Mammary epithelial cell (primary cell): ENCODE measurements at regions of chr12 and their contacts with region 1.

Region 1: DNA sequence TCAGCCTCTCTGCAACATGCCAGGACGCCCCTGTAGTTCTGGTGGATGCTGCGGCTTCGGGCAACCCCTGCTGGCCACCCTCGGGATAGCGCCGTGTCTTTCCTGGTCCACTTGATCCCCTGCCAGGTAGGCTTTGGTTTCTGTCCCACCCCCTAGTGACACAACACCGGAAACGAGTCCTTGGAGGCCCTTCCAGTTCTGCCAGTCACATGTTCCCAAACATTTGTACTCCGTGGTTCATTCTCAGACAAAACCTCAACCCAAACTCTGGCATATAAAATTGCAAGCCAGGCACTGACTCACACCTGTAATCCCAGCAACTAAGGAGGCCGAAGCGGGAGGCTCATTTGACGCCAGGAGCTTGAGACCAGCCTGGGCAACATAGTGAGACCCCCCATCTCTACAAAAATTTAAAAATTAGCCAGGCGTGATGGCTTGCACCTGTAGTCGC is 37.1 kb downstream of the RASAL1 start:
- DNase-seq: peak; percentile 97
- H3K4me3 ChIP-seq: no peak overlapping the region
- H3K27ac ChIP-seq: no peak overlapping the region
- H3K4me1 ChIP-seq: peaks cover 2% of the 10 kb centered on the region
- H3K27me3 ChIP-seq: no peaks in the 10 kb centered on the region
- CTCF ChIP-seq: peak; percentile 92 to 94

Region 2: GRCh38 chr12:112096667-112097066 is 1001.8 kb before region 1 on chr12:
- CTCF ChIA-PET with region 1: no interaction called
- dilution Hi-C with region 1: no loop called
- in situ Hi-C with region 1: no loop called
- intact Hi-C with region 1: loop called (anchors 10 kb)
- DNase-seq: peak; percentile 86
- H3K4me3 ChIP-seq: no peak overlapping the region
- H3K27ac ChIP-seq: no peak overlapping the region
- H3K4me1 ChIP-seq: peaks cover 14% of the 10 kb centered on the region
- H3K27me3 ChIP-seq: no peaks in the 10 kb centered on the region
- CTCF ChIP-seq: no peak

Region 3: DNA sequence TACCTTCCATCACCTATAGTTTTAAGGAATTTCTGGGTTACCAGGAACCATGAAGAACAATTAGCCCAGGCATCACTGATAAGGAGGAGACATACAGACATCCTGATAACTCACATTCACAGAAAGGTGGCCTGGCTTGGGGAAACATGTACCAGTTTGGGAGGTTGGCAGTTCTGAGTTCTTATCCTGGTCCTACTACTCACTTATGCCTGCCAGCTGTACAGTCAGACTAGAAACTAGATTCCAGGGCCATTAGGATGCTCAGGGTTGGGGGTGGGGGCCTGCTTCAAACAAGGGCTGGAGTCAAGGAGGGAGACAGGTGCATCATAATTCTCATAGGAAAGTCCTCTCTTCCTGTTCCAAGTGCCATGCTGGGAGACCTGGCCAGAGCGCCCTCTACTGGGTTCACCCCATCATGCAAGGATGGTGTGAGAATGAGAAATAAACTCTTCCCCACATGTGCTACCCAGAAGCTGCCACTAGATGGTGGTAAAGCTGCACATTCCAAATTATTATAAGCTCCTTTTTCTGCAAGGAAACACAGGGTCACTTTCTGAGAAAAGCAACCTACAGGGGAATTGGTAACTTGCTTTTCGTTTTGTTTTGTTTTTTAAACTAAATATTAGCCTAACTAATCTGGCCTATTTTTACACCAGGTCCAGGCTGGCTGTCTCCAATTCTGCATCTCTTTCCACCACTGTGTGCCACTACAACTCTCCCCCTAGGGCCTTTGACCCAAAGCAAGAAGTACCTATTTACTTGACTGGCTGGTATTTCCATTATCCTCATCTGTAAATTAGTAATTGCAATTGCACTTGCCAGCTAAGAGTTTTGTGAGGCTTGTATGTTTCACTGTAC is 105.7 kb before region 1 on chr12:
- CTCF ChIA-PET with region 1: interaction called, 10 read pairs
- dilution Hi-C with region 1: loop called (anchors 10 kb)
- in situ Hi-C with region 1: no loop called
- intact Hi-C with region 1: loop called (anchors 1 kb)
- DNase-seq: peak; percentile 60
- H3K4me3 ChIP-seq: no peak overlapping the region
- H3K27ac ChIP-seq: no peak overlapping the region
- H3K4me1 ChIP-seq: no peaks in the 10 kb centered on the region
- H3K27me3 ChIP-seq: no peaks in the 10 kb centered on the region
- CTCF ChIP-seq: peak; percentile 93 to 99

Region 4: DNA sequence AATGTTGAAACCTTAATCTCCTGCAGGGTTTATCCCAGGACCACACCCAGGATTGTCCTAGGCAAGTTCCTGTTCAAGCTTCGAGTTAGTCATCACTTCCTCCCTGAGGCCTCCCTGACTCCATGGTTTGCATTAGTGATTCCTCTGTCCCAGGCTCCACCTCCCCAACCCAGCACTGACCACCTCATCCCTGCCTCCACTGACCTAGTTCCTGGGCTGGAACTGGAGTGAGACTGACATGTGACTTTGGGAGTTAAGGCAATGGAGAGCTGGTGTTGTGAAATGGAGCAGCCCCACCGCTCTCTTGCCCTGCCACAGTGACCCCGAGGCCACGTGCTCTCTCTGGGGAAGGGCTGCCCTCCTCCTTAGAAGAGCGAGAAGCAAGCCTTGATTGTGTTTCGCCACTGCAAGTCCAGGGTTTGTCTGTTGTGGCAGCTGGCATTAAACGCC is 57.7 kb before region 1 on chr12:
- CTCF ChIA-PET with region 1: interaction called, 3 read pairs
- dilution Hi-C with region 1: loop called (anchors 5 kb)
- in situ Hi-C with region 1: no loop called
- intact Hi-C with region 1: no loop called
- DNase-seq: peak; percentile 98
- H3K4me3 ChIP-seq: no peak overlapping the region
- H3K27ac ChIP-seq: peak overlapping the region; percentile 89
- H3K4me1 ChIP-seq: peaks cover 20% of the 10 kb centered on the region
- H3K27me3 ChIP-seq: no peaks in the 10 kb centered on the region
- CTCF ChIP-seq: no peak

Region 5: DNA sequence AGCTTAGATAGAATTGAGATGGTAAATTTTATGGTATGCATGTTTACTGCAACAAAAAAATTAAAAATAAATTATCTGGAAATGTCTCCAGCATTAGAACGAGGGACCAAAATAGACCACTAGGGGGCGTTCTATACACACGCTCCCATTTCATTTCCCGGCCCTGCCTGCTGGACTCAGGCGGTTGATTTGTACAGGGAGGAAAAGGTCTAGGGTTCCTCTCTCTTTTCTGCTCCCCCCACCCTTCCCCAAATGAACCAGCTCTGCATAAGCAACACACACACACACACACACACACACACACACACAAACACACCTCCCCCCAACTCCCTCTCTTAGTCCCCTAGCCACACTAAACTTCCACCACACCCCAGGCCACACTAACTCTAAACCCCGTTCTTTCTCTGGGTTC is 49.7 kb before region 1 on chr12:
- CTCF ChIA-PET with region 1: no interaction called
- dilution Hi-C with region 1: loop called (anchors 5 kb)
- in situ Hi-C with region 1: no loop called
- intact Hi-C with region 1: loop called (anchors 1 kb)
- DNase-seq: peak; percentile 32
- H3K4me3 ChIP-seq: no peak overlapping the region
- H3K27ac ChIP-seq: no peak overlapping the region
- H3K4me1 ChIP-seq: no peaks in the 10 kb centered on the region
- H3K27me3 ChIP-seq: no peaks in the 10 kb centered on the region
- CTCF ChIP-seq: peak; percentile 71 to 84

Region 6: GRCh38 chr12:113152835-113153814 is 54.7 kb after region 1 on chr12:
- CTCF ChIA-PET with region 1: no interaction called
- dilution Hi-C with region 1: loop called (anchors 5 kb)
- in situ Hi-C with region 1: no loop called
- intact Hi-C with region 1: loop called (anchors 1 kb)
- DNase-seq: peak; percentile 79
- H3K4me3 ChIP-seq: peak overlapping the region; percentile 46 to 60 (median 46)
- H3K27ac ChIP-seq: no peak overlapping the region
- H3K4me1 ChIP-seq: peaks cover 25% of the 10 kb centered on the region
- H3K27me3 ChIP-seq: no peaks in the 10 kb centered on the region
- CTCF ChIP-seq: peak; percentile 3 to 69

Region 7: GRCh38 chr12:113174461-113175384 is 76.3 kb after region 1 on chr12:
- CTCF ChIA-PET with region 1: no interaction called
- dilution Hi-C with region 1: no loop called
- in situ Hi-C with region 1: no loop called
- intact Hi-C with region 1: loop called (anchors 5 kb)
- DNase-seq: peak; percentile 27
- H3K4me3 ChIP-seq: no peak overlapping the region
- H3K27ac ChIP-seq: no peak overlapping the region
- H3K4me1 ChIP-seq: no peaks in the 10 kb centered on the region
- H3K27me3 ChIP-seq: no peaks in the 10 kb centered on the region
- CTCF ChIP-seq: peak; percentile 97 to 98

Region 8: DNA sequence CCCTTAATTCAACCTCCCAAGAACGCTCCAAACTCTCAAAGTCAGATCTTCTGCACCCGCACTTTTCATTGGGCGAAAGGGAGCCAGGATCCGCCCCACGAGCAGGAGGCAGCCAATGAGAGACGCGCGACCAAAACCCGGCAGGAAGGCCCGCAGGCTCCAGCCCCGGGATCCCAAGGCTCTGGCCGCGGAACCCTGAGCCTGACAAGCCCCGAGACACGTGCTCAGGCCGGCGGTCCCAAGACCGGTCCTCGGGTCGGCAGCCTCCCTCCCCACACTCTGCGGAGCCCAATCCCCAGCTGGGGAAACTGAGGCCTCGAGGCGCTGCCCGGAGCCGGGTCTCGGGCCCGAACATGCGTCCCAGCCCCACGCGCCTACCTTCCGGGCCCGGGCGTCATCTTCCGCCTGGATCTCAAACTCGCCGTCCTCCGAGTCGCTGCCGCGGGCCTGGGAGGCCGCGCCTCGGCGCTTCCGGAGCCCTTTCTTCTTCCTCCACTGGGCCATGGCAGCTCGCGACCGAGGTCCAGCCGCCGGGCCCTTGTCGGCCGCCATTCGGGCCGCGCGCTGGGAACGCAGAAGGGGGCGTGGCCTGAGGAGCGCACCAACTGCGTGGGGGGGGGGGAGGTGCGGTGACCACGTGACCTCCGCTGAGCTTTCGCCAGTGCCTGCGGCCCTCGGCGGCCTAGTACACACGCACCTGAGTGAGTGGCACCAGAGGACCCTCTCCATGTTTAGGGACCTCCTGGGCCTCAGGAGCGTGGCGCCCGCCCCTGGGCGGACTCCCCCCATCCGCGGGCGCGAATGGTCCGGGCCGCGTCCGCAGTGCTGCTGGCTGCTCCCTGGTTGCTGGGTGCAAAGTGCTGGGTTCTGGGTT is 86.7 kb after region 1 on chr12 and contains the starts of genes DDX54 and RITA1:
- CTCF ChIA-PET with region 1: no interaction called
- dilution Hi-C with region 1: no loop called
- in situ Hi-C with region 1: no loop called
- intact Hi-C with region 1: no loop called
- DNase-seq: peak; percentile 89
- H3K4me3 ChIP-seq: peak within 1 kb of the TSS; percentile 74 to 94 (median 93)
- H3K27ac ChIP-seq: peak within 1 kb of the TSS; percentile 91
- H3K4me1 ChIP-seq: peaks cover 12% of the 10 kb centered on the region
- H3K27me3 ChIP-seq: no peaks in the 10 kb centered on the region
- CTCF ChIP-seq: no peak
- total RNA-seq, gene DDX54: 49.3 to 92.9 TPM
- total RNA-seq, gene RITA1: 21.0 to 21.5 TPM

Region 9: DNA sequence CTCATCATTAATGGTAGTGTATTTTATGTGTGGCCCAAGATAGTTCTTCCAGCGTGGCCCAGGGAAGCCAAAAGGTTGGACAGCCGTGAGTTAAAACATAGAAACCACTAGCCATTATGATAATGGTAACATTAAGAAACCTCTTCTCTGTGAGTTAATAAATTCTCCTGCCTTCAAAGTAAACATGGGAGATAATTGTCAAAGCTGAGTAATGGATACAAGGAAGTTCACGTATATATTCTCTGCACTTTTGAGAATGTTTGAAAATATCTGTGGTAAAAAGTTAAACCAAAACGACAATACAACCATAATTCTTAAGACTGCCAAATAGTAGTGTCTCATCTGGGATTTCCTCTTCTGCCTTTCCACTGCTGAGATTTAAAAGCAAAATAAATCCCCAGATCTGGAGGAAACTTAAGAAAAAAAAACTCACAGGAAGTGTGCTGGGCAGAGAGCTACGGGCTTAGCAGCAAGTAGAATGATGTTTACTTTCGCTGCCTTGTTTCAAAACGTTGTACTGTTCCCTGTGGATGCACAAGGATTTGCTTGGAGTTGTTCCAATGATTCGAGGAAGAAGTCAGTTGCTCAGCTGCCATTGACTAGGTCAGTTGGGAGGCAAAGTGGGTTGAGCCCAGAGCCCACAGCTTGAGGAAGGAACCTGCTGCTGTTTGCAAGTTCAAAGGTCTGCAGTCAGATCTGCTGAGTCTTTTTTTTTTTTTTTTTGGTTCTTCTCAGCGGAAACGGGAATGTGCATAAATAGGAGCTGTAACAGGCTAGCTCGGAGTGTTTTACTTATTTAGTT is 124.5 kb after region 1 on chr12:
- CTCF ChIA-PET with region 1: no interaction called
- dilution Hi-C with region 1: no loop called
- in situ Hi-C with region 1: no loop called
- intact Hi-C with region 1: no loop called
- DNase-seq: peak; percentile 15
- H3K4me3 ChIP-seq: peak overlapping the region in 2 of 3 experiments; percentile 61 to 85
- H3K27ac ChIP-seq: peak overlapping the region; percentile 66
- H3K4me1 ChIP-seq: peaks cover 16% of the 10 kb centered on the region
- H3K27me3 ChIP-seq: no peaks in the 10 kb centered on the region
- CTCF ChIP-seq: no peak

Region 10: GRCh38 chr12:113241191-113242025 is 142.9 kb after region 1 on chr12:
- CTCF ChIA-PET with region 1: no interaction called
- dilution Hi-C with region 1: no loop called
- in situ Hi-C with region 1: no loop called
- intact Hi-C with region 1: no loop called
- DNase-seq: peak; percentile 98
- H3K4me3 ChIP-seq: peak overlapping the region in 1 of 3 experiments; percentile 13
- H3K27ac ChIP-seq: peak overlapping the region; percentile 92
- H3K4me1 ChIP-seq: peaks cover 72% of the 10 kb centered on the region
- H3K27me3 ChIP-seq: no peaks in the 10 kb centered on the region
- CTCF ChIP-seq: no peak

Region 11: DNA sequence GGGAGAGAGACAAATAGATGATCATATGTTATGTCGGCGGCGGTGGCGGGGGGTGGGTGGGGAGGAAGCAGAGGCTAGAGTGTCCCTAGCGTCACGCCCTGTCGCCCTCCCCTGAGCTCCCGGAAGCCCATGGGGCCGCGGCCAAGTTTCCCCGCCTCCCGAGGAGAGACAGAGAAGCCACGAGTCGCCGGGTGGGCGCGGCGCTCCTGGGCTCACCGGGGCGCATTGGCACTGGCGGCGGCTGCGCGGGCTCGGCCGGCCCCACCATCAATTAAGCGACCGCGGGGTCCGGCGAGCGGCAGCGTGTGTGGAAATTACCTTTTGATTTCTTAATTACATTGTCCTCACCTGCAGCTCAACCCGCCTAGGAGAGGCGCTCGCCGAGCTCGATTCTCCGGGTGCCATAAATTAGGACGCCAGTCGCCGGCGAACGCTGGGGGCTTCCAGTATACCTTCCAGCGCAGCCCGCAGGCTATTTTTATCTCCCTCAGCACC is 493.1 kb after region 1 on chr12:
- CTCF ChIA-PET with region 1: no interaction called
- dilution Hi-C with region 1: no loop called
- in situ Hi-C with region 1: no loop called
- intact Hi-C with region 1: no loop called
- DNase-seq: no peak
- H3K4me3 ChIP-seq: no peak overlapping the region
- H3K27ac ChIP-seq: no peak overlapping the region
- H3K4me1 ChIP-seq: no peaks in the 10 kb centered on the region
- H3K27me3 ChIP-seq: peaks cover 13% of the 10 kb centered on the region
- CTCF ChIP-seq: no peak